OCI-LY7 (cell line): ENCODE measurements at regions of chrX and their contacts with region 1.

Region 1: DNA sequence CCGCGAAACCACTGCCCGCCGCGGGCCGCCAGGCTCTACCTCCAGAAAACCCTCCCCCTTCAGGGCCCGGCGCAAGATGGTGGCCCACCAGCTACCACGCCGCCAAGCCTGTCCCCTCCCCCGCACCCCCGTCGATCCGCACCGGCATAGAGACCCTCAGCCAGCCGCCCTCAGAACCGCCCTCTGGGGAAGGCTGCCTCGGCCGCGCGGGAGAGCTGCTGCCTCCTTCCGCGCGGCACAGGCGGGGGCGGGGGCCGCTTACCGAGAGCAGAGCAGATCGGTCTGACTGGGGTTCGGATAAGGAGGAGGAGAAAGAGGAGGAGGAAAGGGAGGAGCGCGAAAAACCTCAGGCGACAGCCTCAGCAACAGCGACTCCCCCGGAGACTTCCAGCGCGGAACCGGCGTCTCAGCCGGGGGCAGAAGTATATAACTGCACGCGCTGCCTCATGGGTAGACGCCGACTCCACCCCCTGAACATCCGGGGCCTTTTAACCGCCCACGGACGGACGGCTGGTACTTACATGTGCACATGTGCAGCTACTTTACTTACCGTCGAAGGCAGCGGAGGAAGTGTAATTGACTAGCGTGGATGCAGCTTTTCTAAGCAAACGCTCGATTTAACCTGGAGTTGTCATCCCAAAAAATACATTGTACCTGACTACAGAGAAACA is at the start of gene ZNF280C:
- DNase-seq: peak; percentile 94
- H3K4me3 ChIP-seq: peak within 1 kb of the TSS; percentile 99
- H3K27ac ChIP-seq: peak within 1 kb of the TSS; percentile 89
- H3K4me1 ChIP-seq: peaks cover 26% of the 10 kb centered on the region
- CTCF ChIP-seq: peak; percentile 43
- total RNA-seq, gene ZNF280C: 5.0 and 5.7 TPM in 2 replicates

Region 2: DNA sequence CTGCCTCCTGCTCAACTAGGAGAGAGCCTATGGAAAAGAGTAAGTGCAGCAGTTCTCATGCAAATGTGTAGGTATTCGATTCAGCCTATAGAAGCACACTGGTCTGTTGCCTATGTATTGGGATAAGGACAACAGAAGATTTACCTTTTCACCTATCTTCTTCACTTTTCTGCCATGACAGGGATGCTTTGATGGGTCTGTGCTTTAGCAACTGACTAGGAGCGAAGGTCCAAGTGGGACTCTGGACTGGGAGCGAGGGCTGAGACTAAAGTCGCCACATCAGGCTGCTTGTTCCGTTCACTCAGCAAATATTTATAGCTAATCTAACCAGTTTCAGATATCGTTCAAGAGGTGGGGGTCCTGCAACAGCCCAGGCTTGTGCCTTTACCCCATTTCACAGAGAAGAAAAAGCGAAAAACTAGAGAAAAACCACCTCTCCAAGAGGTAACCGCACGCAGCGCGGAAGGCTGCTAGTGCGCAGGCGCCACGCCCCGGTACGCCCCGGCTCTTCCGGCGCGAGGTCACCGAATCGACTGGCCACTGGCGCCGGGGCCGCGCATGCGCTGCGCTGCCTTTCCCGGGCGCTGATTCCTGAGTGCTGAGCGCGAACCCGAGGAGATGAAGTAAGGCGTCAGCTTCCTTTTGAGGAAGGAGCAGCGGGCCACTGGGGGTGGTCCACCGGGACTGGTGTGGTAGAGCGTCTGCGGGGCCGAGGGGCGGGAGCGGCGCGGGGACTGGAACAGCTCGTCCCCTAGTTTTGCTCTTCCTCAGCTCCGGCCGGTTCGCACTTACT is 133.0 kb after region 1 on chrX and contains the start of gene RBMX2:
- CTCF ChIA-PET with region 1: no interaction called
- POLR2A ChIA-PET with region 1: no interaction called
- intact Hi-C with region 1: loop called (anchors 10 kb)
- DNase-seq: peak; percentile 78
- H3K4me3 ChIP-seq: peak within 1 kb of the TSS; percentile 94
- H3K27ac ChIP-seq: peak within 1 kb of the TSS; percentile 50
- H3K4me1 ChIP-seq: peaks cover 4% of the 10 kb centered on the region
- CTCF ChIP-seq: no peak
- total RNA-seq, gene RBMX2: 17.0 and 19.5 TPM in 2 replicates